Common myeloid progenitor, CD34-positive (primary cell): ENCODE measurements at regions of chr1 and their contacts with region 1.

Region 1: DNA sequence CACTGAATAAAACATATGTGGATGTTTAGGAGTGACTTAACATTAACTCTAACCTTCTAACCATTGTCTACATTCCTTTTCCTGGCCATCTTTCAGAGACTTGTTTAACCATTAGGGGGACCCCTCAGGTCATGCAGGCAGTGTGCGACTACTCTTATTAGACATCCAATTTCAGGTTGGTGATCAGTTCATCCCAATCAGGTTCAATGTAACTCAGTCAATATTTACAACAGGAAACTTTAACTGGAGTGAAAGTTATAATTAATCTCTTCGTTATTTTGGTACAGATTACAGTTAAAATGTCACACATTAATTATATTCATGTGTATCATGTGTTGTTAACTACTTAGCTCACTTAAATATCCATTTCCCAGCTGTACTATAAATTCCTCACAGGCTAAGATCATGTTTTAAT is 68.8 kb upstream of the RGS1 start:
- DNase-seq: peak; percentile 54 to 66 (median 62)
- H3K4me3 ChIP-seq: no peak overlapping the region
- H3K27ac ChIP-seq: no peak overlapping the region
- H3K4me1 ChIP-seq: no peaks in the 10 kb centered on the region
- H3K27me3 ChIP-seq: no peaks in the 10 kb centered on the region

Region 2: DNA sequence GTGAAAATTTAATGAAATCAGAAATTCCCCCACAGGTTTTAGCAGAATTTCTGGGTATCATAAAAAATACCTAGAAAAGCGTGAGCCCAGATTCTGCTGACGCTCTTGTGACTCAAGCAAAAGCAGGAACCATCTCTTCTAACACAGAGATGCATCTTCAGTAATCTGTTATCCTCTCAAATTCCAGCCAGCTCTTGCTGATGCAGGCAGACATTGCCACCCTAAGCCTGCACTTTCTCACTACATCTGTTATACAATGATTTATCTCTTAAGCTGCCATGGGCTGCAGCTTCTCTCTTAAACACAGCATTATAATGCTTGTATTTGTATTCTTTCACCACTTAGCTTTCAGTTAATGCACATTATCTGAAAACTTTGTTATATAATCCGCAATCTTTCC is 44.1 kb before region 1 on chr1:
- CTCF ChIA-PET with region 1: no interaction called
- POLR2A ChIA-PET with region 1: no interaction called
- DNase-seq: no peak
- H3K4me3 ChIP-seq: no peak overlapping the region
- H3K27ac ChIP-seq: no peak overlapping the region
- H3K4me1 ChIP-seq: peaks cover 0 to 2% (median 0%) of the 10 kb centered on the region in 4 experiments
- H3K27me3 ChIP-seq: no peaks in the 10 kb centered on the region

Region 3: DNA sequence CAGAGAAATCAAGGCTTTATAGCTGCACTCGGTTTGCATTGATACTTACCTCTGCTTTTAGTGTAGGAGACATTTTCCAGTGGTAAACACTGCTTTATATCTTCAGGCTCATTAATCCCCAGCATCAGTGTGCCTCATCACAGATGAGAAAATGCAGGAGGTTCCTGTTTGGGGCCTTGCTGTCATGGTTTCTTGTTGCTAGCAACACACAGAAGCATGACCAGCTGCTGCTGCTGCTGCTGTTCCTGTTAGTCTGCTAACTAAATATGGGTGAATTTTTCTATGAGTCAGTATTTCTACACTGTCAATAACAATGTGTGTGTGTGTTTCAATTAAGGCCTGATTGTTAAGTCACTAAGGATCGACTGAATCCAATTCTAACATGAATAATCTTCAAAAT is 17.0 kb before region 1 on chr1:
- CTCF ChIA-PET with region 1: interaction called, 17 read pairs
- POLR2A ChIA-PET with region 1: interaction called, 3 read pairs
- DNase-seq: peak; percentile 75 to 97 (median 94)
- H3K4me3 ChIP-seq: no peak overlapping the region
- H3K27ac ChIP-seq: peak overlapping the region; percentile 64 to 79
- H3K4me1 ChIP-seq: peaks cover 0 to 13% (median 3%) of the 10 kb centered on the region in 4 experiments
- H3K27me3 ChIP-seq: no peaks in the 10 kb centered on the region

Region 4: GRCh38 chr1:192580351-192580962 is 73.7 kb after region 1 on chr1:
- CTCF ChIA-PET with region 1: interaction called, 16 read pairs
- POLR2A ChIA-PET with region 1: no interaction called
- DNase-seq: peak; percentile 50 to 59 (median 52)
- H3K4me3 ChIP-seq: no peak overlapping the region
- H3K27ac ChIP-seq: no peak overlapping the region
- H3K4me1 ChIP-seq: peaks cover 2 to 8% (median 6%) of the 10 kb centered on the region in 4 experiments
- H3K27me3 ChIP-seq: no peaks in the 10 kb centered on the region

Region 5: DNA sequence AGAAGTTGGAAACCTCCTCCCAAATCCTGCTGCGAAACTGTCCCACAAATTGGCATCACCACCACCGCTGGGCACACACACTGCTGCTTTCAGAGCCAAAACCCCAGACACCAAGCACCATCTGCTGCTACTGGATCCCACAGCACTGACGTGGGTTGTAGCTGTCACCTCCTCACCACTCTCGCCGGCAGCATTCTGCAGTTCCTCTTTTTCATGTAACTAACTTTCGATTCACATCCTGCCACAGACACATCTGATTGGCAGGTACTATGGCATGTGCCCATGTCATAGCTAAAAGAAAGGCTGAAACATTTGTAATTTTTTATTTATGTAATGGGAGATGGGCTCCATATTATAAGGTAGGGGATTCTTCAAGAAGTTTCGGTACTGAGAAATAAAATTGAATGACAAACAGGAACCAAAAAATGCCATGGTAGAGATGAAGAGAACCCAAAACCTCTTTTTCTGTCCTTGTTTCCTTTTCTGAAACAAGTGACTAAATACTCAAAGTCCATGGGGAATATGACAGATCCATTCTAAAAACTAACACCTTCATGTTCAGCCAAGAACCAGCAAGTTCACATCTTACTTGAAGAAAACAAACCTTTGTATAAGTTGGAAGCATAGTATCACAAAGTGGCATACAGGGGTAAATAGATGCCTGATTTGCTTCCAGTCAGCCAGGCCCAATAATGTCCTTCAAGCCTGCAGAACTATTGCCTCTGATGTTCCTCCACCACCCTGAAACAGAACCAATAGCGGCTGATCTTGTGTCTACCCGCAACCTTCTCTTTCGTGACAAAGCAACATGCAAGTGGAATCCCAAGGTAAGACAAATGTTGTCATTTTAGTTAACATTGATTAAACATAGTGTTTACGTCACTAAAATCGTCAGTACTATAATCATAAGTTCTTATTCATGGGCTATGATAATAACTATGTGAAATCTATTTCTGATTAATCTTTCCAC is 102.6 kb after region 1 on chr1:
- CTCF ChIA-PET with region 1: interaction called, 11 read pairs
- POLR2A ChIA-PET with region 1: interaction called, 3 read pairs
- DNase-seq: peak; percentile 92 to 99 (median 98)
- H3K4me3 ChIP-seq: no peak overlapping the region
- H3K27ac ChIP-seq: peak overlapping the region; percentile 70 to 78
- H3K4me1 ChIP-seq: peaks cover 11 to 32% (median 23%) of the 10 kb centered on the region in 4 experiments
- H3K27me3 ChIP-seq: no peaks in the 10 kb centered on the region

Region 6: GRCh38 chr1:192620071-192620635 is 113.4 kb after region 1 on chr1:
- CTCF ChIA-PET with region 1: no interaction called
- POLR2A ChIA-PET with region 1: no interaction called
- DNase-seq: no peak
- H3K4me3 ChIP-seq: no peak overlapping the region
- H3K27ac ChIP-seq: no peak overlapping the region
- H3K4me1 ChIP-seq: no peaks in the 10 kb centered on the region
- H3K27me3 ChIP-seq: no peaks in the 10 kb centered on the region